Endothelial cell of umbilical vein (primary cell): ENCODE measurements at regions of chr2 and their contacts with region 1.

Region 1: GRCh38 chr2:158456309-158457066 is at the starts of genes CCDC148 and PKP4:
- DNase-seq: peak; percentile 94
- H3K4me3 ChIP-seq: peak within 1 kb of the TSS; percentile 53 to 86 (median 81)
- H3K27ac ChIP-seq: peak within 1 kb of the TSS; percentile 75
- H3K4me1 ChIP-seq: peaks cover 36% of the 10 kb centered on the region
- H3K27me3 ChIP-seq: peaks cover 7 to 13% of the 10 kb centered on the region in 2 experiments
- CTCF ChIP-seq: no peak
- POLR2A ChIP-seq: no peak
- total RNA-seq, gene CCDC148: 0.69 TPM in 1 of 2 replicates, not detected in the other
- total RNA-seq, gene PKP4: 55.1 and 68.5 TPM in 2 replicates

Region 2: DNA sequence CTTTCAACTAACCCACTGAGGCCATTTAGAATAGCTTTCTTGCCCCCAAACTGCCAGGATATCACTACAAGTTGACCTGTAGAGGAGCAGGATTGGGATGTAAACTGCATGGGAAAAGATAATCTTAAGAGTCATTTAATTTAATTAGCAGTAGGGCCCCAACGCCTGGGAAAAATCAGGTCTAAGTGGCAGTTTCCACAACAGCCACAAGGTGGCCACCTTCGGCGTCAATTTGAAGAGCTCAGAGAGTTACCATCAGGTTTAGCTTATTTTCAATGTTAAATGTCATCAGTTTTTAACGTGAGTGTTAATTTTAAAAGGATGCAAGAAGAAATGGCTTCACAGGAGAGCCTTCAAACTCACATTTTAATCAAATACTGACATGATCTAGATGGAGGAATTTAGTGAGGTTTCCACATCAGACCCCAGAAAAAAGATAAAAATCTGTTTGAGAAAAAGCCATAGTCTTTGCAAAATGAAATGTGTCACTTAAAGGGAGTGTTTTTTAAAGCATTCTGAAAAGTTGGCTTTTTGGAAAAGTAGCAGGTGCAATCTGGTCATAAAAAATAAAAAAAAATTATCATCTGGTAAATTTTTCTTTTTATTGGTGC is 432.1 kb before region 1 on chr2:
- CTCF ChIA-PET with region 1: interaction called, 23 read pairs
- POLR2A ChIA-PET with region 1: no interaction called
- dilution Hi-C with region 1: no loop called
- intact Hi-C with region 1: no loop called
- DNase-seq: peak; percentile 61
- H3K4me3 ChIP-seq: no peak overlapping the region
- H3K27ac ChIP-seq: no peak overlapping the region
- H3K4me1 ChIP-seq: no peaks in the 10 kb centered on the region
- H3K27me3 ChIP-seq: peaks cover 6 to 11% of the 10 kb centered on the region in 2 experiments
- CTCF ChIP-seq: peak; percentile 70 to 84
- POLR2A ChIP-seq: no peak

Region 3: DNA sequence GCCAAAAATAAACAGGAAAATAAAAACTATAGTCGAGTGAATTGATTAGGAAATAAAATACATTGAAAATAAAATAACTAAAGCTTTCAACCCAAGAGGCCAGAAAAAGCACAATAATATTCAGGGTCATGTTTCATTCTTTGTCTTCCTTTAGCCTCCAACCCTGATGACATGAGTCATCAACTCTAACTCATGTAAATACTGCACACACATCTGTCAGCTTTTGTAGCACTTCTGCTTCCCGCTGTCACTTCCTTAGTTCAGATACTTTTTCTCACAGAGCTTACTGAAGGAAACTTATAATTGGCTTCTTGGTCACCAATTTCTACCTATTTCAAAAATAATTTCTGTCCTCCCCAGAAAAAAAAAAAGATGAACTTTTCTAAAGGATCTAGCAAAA is 242.1 kb before region 1 on chr2:
- CTCF ChIA-PET with region 1: interaction called, 3 read pairs
- POLR2A ChIA-PET with region 1: no interaction called
- dilution Hi-C with region 1: no loop called
- intact Hi-C with region 1: loop called (anchors 5 kb)
- DNase-seq: peak; percentile 82
- H3K4me3 ChIP-seq: no peak overlapping the region
- H3K27ac ChIP-seq: peak overlapping the region; percentile 63
- H3K4me1 ChIP-seq: peaks cover 8% of the 10 kb centered on the region
- H3K27me3 ChIP-seq: peaks cover 3 to 4% of the 10 kb centered on the region in 2 experiments
- CTCF ChIP-seq: no peak
- POLR2A ChIP-seq: no peak

Region 4: GRCh38 chr2:158619496-158619895 is 163.0 kb after region 1 on chr2:
- CTCF ChIA-PET with region 1: interaction called, 11 read pairs
- POLR2A ChIA-PET with region 1: no interaction called
- dilution Hi-C with region 1: no loop called
- intact Hi-C with region 1: no loop called
- DNase-seq: peak; percentile 61
- H3K4me3 ChIP-seq: no peak overlapping the region
- H3K27ac ChIP-seq: peak overlapping the region; percentile 19
- H3K4me1 ChIP-seq: peaks cover 7% of the 10 kb centered on the region
- H3K27me3 ChIP-seq: no peaks in the 10 kb centered on the region
- CTCF ChIP-seq: no peak
- POLR2A ChIP-seq: no peak

Region 5: GRCh38 chr2:158667586-158667985 is 211.1 kb after region 1 on chr2:
- CTCF ChIA-PET with region 1: interaction called, 14 read pairs
- POLR2A ChIA-PET with region 1: no interaction called
- dilution Hi-C with region 1: no loop called
- intact Hi-C with region 1: loop called (anchors 1 kb)
- DNase-seq: peak; percentile 97
- H3K4me3 ChIP-seq: peak overlapping the region in 1 of 3 experiments; percentile 30
- H3K27ac ChIP-seq: peak overlapping the region; percentile 82
- H3K4me1 ChIP-seq: peaks cover 34% of the 10 kb centered on the region
- H3K27me3 ChIP-seq: no peaks in the 10 kb centered on the region
- CTCF ChIP-seq: no peak
- POLR2A ChIP-seq: peak; percentile 61

Region 6: DNA sequence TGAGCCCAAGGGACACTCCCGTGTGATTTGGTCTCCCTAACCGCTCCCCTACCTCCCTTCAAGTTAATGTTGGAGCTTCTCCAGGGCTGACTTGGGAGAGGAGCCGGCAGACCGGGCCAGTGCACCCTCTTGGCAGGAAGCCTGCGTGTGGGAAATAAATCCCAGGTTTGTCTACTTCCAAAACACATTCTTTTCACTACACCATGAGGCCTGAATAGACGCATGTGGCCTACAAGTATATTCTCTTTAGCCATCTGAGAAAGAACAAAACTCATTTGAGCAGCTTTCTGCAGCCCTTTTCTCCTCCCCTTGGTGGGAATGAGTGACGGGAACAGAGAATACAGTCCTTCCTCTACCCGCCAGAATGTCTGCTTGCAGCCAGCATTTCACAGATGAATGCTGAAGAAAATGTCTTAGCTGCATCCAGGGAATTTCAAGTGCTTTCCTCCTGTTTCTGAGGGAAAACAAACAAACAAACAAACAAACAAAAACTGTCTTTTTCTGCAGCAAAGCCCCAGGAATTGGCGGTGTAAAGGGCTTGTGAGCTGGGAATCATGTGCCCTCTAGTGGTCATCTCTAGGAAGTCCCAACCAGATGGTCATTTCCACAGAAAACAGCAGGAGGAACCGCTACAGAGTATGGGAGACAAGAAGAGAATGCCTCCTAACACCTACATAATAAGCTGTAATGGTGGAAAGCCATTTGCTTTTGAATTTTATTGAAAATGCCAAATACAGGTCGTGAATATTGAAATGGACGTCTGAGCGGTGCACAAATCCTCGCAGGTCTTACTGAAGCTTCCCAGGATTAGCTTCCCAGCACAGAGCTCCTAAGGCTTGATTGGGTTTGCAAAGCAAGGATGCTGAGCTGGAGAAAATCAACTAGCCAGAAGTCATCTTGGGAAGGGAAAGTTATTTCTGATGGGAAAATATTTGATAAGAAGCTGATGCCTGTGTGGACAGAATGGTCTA is 297.4 kb after region 1 on chr2:
- CTCF ChIA-PET with region 1: interaction called, 33 read pairs
- POLR2A ChIA-PET with region 1: no interaction called
- dilution Hi-C with region 1: no loop called
- intact Hi-C with region 1: loop called (anchors 2 kb)
- DNase-seq: peak; percentile 78
- H3K4me3 ChIP-seq: no peak overlapping the region
- H3K27ac ChIP-seq: no peak overlapping the region
- H3K4me1 ChIP-seq: no peaks in the 10 kb centered on the region
- H3K27me3 ChIP-seq: peaks cover 13 to 31% of the 10 kb centered on the region in 2 experiments
- CTCF ChIP-seq: peak; percentile 77 to 92
- POLR2A ChIP-seq: no peak

Region 7: DNA sequence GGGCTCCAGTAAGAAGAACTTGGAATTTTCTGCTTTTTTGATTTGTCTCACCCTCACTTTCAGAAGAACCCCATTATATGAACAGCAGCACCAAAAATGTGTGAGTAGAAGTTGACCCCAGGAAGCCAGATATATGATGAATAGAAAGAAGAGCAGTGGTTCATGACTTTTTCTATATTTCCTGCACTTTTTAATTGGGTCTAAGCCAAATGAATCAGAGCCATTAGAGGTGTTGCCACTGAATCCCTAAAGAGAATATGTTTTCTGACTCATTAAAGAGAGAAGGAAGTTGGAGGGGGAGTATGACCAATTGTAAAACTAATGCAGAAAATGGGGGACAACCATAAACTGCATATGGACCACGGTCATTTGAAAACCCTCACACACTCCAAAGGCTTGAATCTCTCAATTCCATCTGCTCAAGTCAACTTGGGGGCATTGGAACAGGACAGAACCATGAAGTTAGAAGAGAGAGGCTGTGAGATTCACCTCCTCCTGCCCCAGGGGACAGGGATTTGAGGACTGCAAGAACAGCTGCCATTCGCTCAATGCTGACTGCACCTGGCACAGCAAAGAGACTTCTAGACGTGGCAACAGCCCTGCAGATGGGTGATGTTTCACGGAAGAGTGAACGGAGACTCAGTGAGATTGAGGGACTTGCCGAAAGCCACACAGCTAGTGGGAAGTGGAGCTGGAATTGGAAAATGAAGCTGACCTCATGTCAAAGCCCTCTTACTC is 341.6 kb after region 1 on chr2:
- CTCF ChIA-PET with region 1: no interaction called
- POLR2A ChIA-PET with region 1: no interaction called
- dilution Hi-C with region 1: no loop called
- intact Hi-C with region 1: no loop called
- DNase-seq: peak; percentile 37
- H3K4me3 ChIP-seq: no peak overlapping the region
- H3K27ac ChIP-seq: no peak overlapping the region
- H3K4me1 ChIP-seq: no peaks in the 10 kb centered on the region
- H3K27me3 ChIP-seq: peaks cover 13 to 19% of the 10 kb centered on the region in 2 experiments
- CTCF ChIP-seq: no peak
- POLR2A ChIP-seq: no peak